MCF 10A (cell line): ENCODE measurements at regions of chr6 and their contacts with region 1.

Region 1: DNA sequence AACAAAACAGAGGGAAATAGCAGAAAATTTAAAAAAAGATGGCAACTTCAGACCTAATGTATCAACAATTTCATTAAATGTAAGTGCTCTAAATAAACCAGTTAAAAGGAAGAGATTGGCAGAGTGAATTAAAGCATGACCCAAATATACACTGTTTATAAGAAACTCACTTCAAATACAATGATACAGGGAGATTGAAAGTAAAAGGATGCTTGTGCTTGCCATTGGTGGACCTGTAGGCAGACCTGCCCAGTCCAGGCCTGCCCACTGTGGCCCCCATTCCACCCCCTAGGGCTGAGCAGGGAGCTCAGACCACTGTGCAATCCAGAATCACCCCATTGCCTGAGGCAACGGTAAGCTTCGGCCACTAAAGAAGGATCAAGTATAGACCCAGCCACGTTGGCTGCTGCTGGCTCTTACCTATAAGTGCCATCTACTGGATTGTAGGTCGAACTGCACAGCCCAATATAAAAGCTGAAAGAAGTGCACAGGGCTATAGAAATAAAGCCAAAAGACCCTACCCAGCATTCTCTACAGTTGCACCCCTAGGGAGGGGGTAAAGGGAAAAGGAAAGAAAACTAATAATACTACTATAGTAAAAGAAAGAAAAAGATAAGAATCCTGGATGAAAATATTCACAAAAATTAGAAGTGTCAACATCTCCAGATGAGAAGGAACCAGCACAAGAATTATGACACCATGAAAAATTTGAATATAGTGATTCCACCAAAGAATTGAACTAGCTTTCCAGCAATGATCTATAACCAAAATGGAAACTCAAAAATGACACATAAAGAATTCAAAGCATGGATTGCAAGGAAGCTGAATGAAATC is 36.1 kb downstream of the PSMB1 start:
- DNase-seq: peak; percentile 65
- H3K4me3 Mint-ChIP-seq: no peak overlapping the region
- H3K27ac Mint-ChIP-seq: no peak overlapping the region
- H3K4me1 Mint-ChIP-seq: peaks cover 4% of the 10 kb centered on the region
- H3K27me3 Mint-ChIP-seq: peaks cover 35% of the 10 kb centered on the region
- CTCF ChIP-seq: peak; percentile 67

Region 2: DNA sequence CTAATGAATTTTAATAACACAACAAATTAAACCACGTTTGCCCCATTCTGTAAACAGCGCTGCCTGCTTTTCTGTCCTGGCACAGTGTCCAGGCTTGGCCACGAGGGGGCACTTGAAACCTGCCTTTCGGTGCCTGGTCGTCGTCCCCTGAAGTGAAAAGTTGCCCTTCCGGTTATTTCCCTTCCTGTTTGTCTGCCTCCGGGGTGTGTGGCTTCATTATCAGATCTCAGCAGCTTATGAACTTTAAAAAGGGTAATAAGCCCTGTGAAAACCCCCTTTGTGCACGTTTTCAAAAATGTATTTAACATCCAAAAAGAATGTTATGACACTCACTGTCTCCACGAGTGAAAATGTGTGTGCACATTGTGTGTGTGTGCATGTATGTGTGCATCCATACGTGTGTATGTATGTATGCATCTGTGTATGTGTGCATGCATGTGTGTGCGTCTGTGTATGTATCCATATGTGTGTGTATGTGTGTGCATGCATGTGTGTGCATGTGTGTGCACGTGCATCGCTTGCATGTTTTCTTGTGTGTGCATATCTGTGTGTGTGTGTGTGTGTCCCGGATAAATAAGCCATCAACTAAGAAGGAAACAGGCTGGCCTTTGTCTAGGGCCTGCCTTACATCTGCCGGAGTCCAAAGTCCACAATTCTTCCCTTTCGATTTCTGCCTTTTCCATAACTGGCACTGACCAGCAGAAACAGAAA is 1621.7 kb before region 1 on chr6:
- CTCF ChIA-PET with region 1: no interaction called
- POLR2A ChIA-PET with region 1: interaction called, 3 read pairs
- intact Hi-C with region 1: loop called (anchors 5 kb)
- DNase-seq: peak; percentile 75
- H3K4me3 Mint-ChIP-seq: peak overlapping the region; percentile 35
- H3K27ac Mint-ChIP-seq: no peak overlapping the region
- H3K4me1 Mint-ChIP-seq: no peaks in the 10 kb centered on the region
- H3K27me3 Mint-ChIP-seq: peaks cover 35% of the 10 kb centered on the region
- CTCF ChIP-seq: peak; percentile 93

Region 3: DNA sequence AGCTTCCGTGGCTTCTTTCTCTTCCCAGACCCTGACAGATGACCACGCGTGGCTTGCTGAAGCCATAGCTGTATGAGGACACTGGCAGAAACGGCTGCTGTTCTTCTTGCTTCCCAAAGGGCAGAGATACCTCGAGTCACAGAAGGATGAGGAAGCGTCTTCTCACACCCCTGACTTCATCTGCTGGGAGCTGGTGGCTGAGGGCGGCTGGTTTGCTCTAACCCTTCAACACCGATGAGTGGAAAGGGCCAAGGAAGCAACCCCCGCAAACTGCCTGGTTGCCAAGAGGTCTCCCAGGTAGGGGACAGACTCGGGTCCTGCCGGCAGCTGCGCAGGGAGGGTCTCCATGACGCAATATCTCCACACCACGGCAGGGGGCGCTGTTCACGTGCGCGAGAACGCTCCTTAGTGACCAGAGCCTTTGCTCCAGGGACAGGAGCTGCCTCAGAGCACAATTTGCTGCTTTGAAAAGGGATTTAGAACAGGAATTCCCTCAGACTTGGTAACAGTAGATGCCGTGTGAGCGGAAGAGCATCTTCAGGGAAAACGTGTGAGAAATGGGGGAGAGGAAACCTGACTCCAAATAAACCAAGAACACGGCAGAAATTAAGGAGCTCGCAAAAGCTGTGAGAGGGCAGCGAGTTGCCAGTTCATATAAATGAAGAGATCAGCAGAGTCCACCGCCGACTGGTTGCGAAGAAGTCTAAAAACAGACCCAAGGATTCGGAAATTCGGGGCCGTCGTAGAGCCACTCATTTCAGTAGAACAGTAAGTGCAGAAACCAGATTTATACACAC is 685.4 kb before region 1 on chr6:
- CTCF ChIA-PET with region 1: interaction called, 10 read pairs
- POLR2A ChIA-PET with region 1: interaction called, 5 read pairs
- intact Hi-C with region 1: loop called (anchors 1 kb)
- DNase-seq: peak; percentile 66
- H3K4me3 Mint-ChIP-seq: no peak overlapping the region
- H3K27ac Mint-ChIP-seq: no peak overlapping the region
- H3K4me1 Mint-ChIP-seq: peaks cover 6% of the 10 kb centered on the region
- H3K27me3 Mint-ChIP-seq: peaks cover 73% of the 10 kb centered on the region
- CTCF ChIP-seq: peak; percentile 90

Region 4: DNA sequence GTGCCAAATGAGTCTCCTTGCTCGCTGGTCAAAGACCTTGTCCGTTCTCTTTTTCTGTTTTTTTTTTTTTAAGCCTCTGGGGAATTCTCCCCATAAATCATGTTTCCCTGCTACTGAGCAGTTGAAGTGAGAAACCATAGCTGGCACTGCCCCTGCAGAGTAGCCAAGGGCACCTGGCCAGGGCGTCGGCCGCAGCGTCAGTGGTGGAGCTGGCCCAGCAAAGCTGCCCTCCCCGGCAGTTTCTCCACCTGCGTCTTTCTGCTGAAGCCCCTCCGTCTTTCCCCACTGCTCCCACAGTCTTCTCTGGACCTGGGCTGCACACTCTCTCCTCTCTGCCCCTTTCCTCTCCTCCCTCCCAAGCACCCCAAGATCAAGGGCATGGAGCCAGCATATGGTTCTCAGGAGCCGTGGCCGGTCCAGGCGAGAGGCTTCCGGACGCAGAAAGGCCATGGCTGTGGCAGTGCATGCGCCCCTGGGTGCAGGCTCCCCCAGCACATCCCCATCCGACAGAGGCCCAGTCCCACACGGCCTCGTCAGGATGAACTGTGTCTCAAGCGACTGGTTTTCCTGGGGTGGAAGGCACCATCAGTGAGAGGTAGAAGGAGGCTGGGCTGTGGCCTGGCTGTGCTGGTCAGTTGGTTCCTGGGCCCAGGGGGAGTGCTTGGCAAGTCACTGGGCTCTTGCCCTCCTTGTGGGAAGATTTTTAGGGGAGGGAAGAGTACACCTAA is 547.5 kb before region 1 on chr6:
- CTCF ChIA-PET with region 1: no interaction called
- POLR2A ChIA-PET with region 1: no interaction called
- intact Hi-C with region 1: loop called (anchors 5 kb)
- DNase-seq: no peak
- H3K4me3 Mint-ChIP-seq: no peak overlapping the region
- H3K27ac Mint-ChIP-seq: peak overlapping the region; percentile 25
- H3K4me1 Mint-ChIP-seq: no peaks in the 10 kb centered on the region
- H3K27me3 Mint-ChIP-seq: peaks cover 25% of the 10 kb centered on the region
- CTCF ChIP-seq: no peak

Region 5: DNA sequence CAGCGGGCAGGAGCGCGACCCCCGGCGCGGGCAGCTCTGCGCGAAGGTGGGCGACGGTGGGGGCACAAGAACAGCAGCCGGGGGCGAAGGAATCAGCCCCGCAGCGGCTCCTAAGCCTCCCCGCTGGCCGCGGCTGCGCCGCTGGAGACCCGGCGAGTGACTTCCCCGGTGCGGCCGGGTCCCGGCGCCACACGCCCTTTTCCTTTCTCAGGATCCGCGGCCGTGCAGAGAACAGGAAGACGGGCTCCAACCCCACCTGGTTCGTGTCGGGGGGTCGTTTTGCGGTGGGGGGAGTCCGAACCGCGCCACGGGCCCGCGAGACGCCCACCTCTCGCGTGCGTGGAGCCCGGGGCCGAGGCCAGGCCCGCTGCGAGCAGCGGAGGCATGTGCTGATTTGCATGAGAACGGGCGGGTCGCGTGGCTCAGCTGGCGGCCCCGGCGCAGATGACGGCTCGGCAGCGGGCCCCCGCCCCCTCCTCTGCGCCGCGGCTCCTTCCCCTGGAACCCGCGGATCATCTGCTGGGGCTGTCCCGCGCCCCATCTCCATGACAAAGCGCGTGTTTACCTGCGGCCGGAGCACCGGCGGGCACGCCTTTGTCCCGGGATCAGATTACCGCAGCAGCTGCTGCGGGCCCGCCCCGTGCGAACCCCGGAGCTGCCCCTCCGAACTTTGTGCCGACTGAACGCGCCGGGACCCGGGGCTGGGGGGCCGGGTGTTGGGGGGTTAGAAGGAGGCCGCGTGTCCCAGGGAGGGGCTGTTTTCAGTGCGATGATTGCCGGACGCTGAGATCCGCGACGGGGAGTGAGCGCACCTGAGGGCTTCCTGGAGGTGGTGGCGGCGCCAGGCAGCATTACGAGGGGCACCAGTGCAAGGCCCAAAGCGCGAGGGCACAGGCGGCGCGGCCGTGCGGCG is 221.2 kb before region 1 on chr6:
- CTCF ChIA-PET with region 1: interaction called, 6 read pairs
- POLR2A ChIA-PET with region 1: no interaction called
- intact Hi-C with region 1: loop called (anchors 2 kb)
- DNase-seq: peak; percentile 34
- H3K4me3 Mint-ChIP-seq: peak overlapping the region; percentile 71
- H3K27ac Mint-ChIP-seq: no peak overlapping the region
- H3K4me1 Mint-ChIP-seq: peaks cover 10% of the 10 kb centered on the region
- H3K27me3 Mint-ChIP-seq: peaks cover 47% of the 10 kb centered on the region
- CTCF ChIP-seq: no peak

Region 6: GRCh38 chr6:170385506-170385905 is 131.5 kb before region 1 on chr6:
- CTCF ChIA-PET with region 1: interaction called, 4 read pairs
- POLR2A ChIA-PET with region 1: no interaction called
- intact Hi-C with region 1: loop called (anchors 1 kb)
- DNase-seq: no peak
- H3K4me3 Mint-ChIP-seq: no peak overlapping the region
- H3K27ac Mint-ChIP-seq: no peak overlapping the region
- H3K4me1 Mint-ChIP-seq: peaks cover 6% of the 10 kb centered on the region
- H3K27me3 Mint-ChIP-seq: no peaks in the 10 kb centered on the region
- CTCF ChIP-seq: no peak

Region 7: DNA sequence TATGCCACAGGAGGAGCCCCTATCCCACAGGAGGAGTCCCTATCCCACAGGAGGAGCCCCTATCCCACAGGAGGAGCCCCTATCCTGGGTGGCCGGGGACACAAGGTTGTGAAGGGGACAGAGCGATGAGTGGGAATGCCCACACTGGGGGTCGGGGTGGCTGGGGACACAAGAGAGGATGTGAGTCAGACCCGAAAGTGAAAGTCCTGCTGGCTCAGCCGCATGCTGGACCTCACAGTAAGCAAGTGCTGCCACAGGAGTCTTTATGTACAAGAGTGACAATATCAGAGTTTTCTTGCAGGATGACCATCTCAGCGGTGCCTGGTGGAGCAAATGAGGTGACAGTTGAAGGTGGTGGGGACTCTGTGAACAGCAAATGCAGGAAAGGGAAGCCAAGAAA is 57.5 kb before region 1 on chr6:
- CTCF ChIA-PET with region 1: no interaction called
- POLR2A ChIA-PET with region 1: no interaction called
- intact Hi-C with region 1: no loop called
- DNase-seq: peak; percentile 22
- H3K4me3 Mint-ChIP-seq: peak overlapping the region; percentile 50
- H3K27ac Mint-ChIP-seq: no peak overlapping the region
- H3K4me1 Mint-ChIP-seq: no peaks in the 10 kb centered on the region
- H3K27me3 Mint-ChIP-seq: no peaks in the 10 kb centered on the region
- CTCF ChIP-seq: no peak

Region 8: DNA sequence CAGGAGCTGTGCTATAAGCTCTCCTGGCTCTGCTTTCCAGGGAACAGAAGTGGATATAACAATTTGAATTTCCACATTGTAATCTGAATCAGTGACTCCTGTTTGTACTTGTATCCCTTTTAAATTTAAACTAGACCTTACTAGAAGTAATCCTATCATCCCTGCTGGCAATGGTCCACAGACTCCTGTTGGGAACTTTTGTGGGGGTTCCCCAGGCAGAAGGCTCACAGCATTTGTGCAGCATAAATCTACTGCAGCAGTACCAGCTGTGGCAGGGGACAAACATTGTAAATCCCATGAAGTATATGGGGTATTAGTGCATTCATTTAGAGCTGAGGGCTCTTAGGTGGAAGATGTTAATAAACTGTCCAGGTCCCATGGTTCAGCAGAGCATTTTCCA is 79.4 kb after region 1 on chr6:
- CTCF ChIA-PET with region 1: no interaction called
- POLR2A ChIA-PET with region 1: no interaction called
- intact Hi-C with region 1: no loop called
- DNase-seq: no peak
- H3K4me3 Mint-ChIP-seq: no peak overlapping the region
- H3K27ac Mint-ChIP-seq: no peak overlapping the region
- H3K4me1 Mint-ChIP-seq: no peaks in the 10 kb centered on the region
- H3K27me3 Mint-ChIP-seq: peaks cover 93% of the 10 kb centered on the region
- CTCF ChIP-seq: no peak